Heart left ventricle (tissue), 16 donors: ENCODE measurements at regions of chr3 and their contacts with region 1.

Region 1: DNA sequence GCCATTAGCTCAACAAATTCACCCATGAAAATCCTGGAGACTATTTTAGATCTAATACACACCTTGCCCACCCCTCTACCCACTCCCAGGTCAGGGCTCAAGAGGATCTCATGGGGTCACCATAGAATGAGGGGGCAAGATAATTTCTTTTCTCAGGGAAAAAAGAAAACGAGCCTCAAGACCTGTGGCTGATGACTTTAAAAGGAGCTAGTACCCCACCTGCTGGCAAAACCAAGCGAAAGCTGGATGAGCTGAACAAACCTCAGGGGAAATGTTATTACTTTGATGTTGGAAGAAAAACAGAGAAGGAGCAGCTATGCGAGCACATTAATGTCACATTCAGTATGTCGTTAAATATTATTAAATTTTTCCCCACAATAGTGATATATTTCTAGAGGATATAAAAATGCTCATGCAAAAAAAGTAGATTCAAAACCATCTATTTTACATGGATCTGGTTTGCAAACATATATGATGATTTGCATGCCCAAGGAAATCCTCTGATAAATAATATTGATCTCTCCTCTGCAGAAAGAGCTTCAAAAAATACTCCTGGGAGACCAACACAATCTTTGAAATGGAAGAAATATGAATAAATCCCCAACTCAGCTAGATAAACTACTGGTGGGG is 37.7 kb downstream of the PLD1 start:
- DNase-seq: peak in 4 of 5 donors; percentile 39 to 66 (median 52)
- ATAC-seq: peak; percentile 20 to 44 (median 40)
- H3K4me3 ChIP-seq: no peak overlapping the region
- H3K27ac ChIP-seq: peak overlapping the region in 3 of 12 donors; percentile 71 to 81 (median 81)
- H3K4me1 ChIP-seq: peaks cover 0 to 49% (median 19%) of the 10 kb centered on the region in 12 donors
- H3K27me3 ChIP-seq: no peaks in the 10 kb centered on the region
- CTCF ChIP-seq: peak; percentile 41 to 80 (median 67)
- POLR2A ChIP-seq: no peak

Region 2: DNA sequence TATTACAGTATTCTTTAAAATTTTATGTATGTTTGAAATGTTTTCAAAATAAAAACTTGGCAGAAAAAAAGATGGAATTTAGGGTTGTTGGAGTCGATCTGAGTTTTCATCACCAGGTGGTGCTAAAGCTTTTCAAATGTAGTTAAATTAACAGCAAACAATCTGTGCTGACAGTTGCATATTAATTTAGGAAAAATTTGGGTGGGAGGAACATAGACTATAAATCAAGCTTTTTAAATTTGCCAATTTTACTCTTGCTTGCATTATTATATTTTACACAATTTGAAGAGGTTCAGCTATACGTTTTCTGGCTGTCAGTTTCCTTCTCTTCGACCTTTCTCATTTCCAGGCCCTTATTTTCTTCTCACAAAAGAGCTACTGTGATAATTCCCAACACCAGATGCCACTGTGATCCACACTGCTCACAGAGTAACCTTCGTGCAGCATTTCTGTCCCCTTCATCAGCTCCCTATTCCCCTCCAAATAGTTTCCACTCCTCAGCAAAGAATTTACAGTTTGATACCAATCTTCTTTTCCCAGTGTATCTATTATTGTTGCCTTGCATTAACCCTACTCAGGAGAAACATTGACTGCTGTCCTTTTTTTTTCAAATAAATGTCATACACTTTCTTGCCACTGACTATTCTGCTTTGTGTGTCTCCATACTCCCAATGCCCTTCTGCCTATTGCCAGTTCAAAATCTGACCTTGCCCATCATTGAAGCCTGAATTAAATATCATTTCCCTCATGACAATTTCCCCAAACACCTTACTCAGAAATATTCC is 810.7 kb before region 1 on chr3:
- intact Hi-C with region 1: loop called in 2 of 10 experiments (anchors 5 to 10 kb)
- DNase-seq: no peak
- ATAC-seq: no peak
- H3K4me3 ChIP-seq: no peak overlapping the region
- H3K27ac ChIP-seq: peak overlapping the region in 1 of 12 donors; percentile 30
- H3K4me1 ChIP-seq: peaks cover 0 to 11% (median 0%) of the 10 kb centered on the region in 12 donors
- H3K27me3 ChIP-seq: no peaks in the 10 kb centered on the region
- CTCF ChIP-seq: peak; percentile 33 to 74 (median 62)
- POLR2A ChIP-seq: no peak

Region 3: GRCh38 chr3:171591059-171591458 is 181.5 kb before region 1 on chr3:
- intact Hi-C with region 1: no loop called
- DNase-seq: no peak
- ATAC-seq: no peak
- H3K4me3 ChIP-seq: no peak overlapping the region
- H3K27ac ChIP-seq: no peak overlapping the region
- H3K4me1 ChIP-seq: no peaks in the 10 kb centered on the region
- H3K27me3 ChIP-seq: no peaks in the 10 kb centered on the region
- CTCF ChIP-seq: no peak
- POLR2A ChIP-seq: no peak

Region 4: DNA sequence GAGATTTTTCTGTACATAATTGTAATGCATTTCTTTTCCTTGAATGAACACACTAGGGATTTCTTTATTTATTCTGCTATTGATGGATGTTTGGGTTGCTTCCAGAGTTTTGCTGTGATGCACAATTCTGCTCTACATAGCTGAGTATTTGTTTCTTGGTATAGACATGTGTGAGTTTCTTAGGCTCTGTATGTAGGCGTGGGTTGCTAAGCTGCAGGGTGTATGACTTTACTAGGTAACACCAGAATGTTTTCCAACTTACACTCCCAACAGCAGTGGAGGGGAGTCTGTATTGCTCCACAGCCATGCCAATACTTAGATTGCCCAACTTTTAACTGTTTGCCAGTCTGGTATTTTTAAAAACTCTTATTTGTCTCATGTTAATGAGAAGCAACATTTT is 156.9 kb before region 1 on chr3:
- intact Hi-C with region 1: loop called in 1 of 10 experiments (anchors 5 kb)
- DNase-seq: no peak
- ATAC-seq: peak in 2 of 4 donors; percentile 40 to 44
- H3K4me3 ChIP-seq: no peak overlapping the region
- H3K27ac ChIP-seq: no peak overlapping the region
- H3K4me1 ChIP-seq: peaks cover 0 to 5% (median 0%) of the 10 kb centered on the region in 12 donors
- H3K27me3 ChIP-seq: no peaks in the 10 kb centered on the region
- CTCF ChIP-seq: no peak
- POLR2A ChIP-seq: no peak

Region 5: GRCh38 chr3:171646357-171647133 is 126.0 kb before region 1 on chr3:
- intact Hi-C with region 1: loop called (anchors 1 to 5 kb)
- DNase-seq: peak in 4 of 5 donors; percentile 34 to 56 (median 48)
- ATAC-seq: peak; percentile 62 to 91 (median 86)
- H3K4me3 ChIP-seq: no peak overlapping the region
- H3K27ac ChIP-seq: peak overlapping the region in 11 of 12 donors; percentile 10 to 84 (median 57)
- H3K4me1 ChIP-seq: peaks cover 0 to 57% (median 22%) of the 10 kb centered on the region in 12 donors
- H3K27me3 ChIP-seq: no peaks in the 10 kb centered on the region
- CTCF ChIP-seq: peak; percentile 50 to 74 (median 60)
- POLR2A ChIP-seq: no peak

Region 6: DNA sequence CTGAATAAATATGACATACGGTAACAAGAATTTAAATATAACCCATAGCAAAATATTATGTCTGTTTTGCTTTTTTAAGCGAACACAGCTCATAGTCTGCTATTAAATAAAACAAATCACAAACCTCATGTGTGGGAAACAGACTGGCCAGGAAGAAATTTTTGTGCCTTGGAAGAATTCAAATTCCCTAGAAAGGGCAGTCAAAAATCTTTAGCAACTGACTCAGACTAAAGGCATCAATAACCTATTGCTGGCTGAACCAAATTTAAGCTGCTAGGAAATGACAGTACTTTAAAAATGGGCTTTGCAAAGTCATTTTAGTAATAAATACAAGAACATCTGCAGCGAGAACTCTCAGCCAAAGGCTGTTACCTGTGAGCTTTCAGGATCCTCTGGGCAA is 113.7 kb before region 1 on chr3:
- intact Hi-C with region 1: no loop called
- DNase-seq: no peak
- ATAC-seq: no peak
- H3K4me3 ChIP-seq: no peak overlapping the region
- H3K27ac ChIP-seq: peak overlapping the region in 2 of 12 donors; percentile 12 to 60
- H3K4me1 ChIP-seq: peaks cover 0 to 38% (median 17%) of the 10 kb centered on the region in 12 donors
- H3K27me3 ChIP-seq: no peaks in the 10 kb centered on the region
- CTCF ChIP-seq: no peak
- POLR2A ChIP-seq: no peak

Region 7: GRCh38 chr3:171703756-171704401 is 68.7 kb before region 1 on chr3:
- intact Hi-C with region 1: loop called in 4 of 10 experiments (anchors 5 to 10 kb)
- DNase-seq: no peak
- ATAC-seq: no peak
- H3K4me3 ChIP-seq: no peak overlapping the region
- H3K27ac ChIP-seq: no peak overlapping the region
- H3K4me1 ChIP-seq: peaks cover 0 to 15% (median 0%) of the 10 kb centered on the region in 12 donors
- H3K27me3 ChIP-seq: no peaks in the 10 kb centered on the region
- CTCF ChIP-seq: peak in 11 of 12 donors; percentile 16 to 53 (median 36)
- POLR2A ChIP-seq: no peak

Region 8: GRCh38 chr3:171736556-171736955 is 36.0 kb before region 1 on chr3:
- intact Hi-C with region 1: loop called in 1 of 10 experiments (anchors 5 kb)
- DNase-seq: no peak
- ATAC-seq: no peak
- H3K4me3 ChIP-seq: no peak overlapping the region
- H3K27ac ChIP-seq: no peak overlapping the region
- H3K4me1 ChIP-seq: peaks cover 0 to 31% (median 8%) of the 10 kb centered on the region in 12 donors
- H3K27me3 ChIP-seq: no peaks in the 10 kb centered on the region
- CTCF ChIP-seq: no peak
- POLR2A ChIP-seq: no peak

Region 9: GRCh38 chr3:171748064-171748918 is 24.3 kb before region 1 on chr3:
- intact Hi-C with region 1: loop called in 1 of 10 experiments (anchors 1 kb)
- DNase-seq: no peak
- ATAC-seq: peak; percentile 58 to 76 (median 60)
- H3K4me3 ChIP-seq: peak overlapping the region in 4 of 12 donors; percentile 11 to 22 (median 12)
- H3K27ac ChIP-seq: peak overlapping the region; percentile 63 to 88 (median 74)
- H3K4me1 ChIP-seq: peaks cover 0 to 75% (median 58%) of the 10 kb centered on the region in 12 donors
- H3K27me3 ChIP-seq: no peaks in the 10 kb centered on the region
- CTCF ChIP-seq: no peak
- POLR2A ChIP-seq: no peak

Region 10: DNA sequence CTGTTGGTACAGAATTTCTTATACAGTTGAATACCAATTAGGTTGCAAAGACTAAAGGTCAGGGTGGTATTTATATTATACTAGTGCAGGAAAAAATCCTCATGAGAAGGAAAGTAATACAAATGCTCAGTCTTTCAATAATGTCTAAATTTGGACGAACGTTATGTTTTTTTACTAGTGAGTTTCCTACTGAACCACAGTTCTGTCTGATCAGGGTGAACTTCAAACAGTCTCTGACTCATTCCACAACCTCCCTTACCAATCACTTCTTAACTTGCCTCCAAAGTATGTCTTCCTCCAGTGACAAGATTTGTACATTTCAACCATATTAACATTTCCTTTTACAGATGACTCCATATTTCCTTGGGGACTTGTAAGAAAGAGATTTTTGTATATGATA is 74.1 kb after region 1 on chr3:
- intact Hi-C with region 1: no loop called
- DNase-seq: no peak
- ATAC-seq: no peak
- H3K4me3 ChIP-seq: no peak overlapping the region
- H3K27ac ChIP-seq: no peak overlapping the region
- H3K4me1 ChIP-seq: peaks cover 0 to 37% (median 9%) of the 10 kb centered on the region in 12 donors
- H3K27me3 ChIP-seq: no peaks in the 10 kb centered on the region
- CTCF ChIP-seq: no peak
- POLR2A ChIP-seq: no peak